Dendritic cell treated with granulocyte-macrophage colony-stimulating factor and Interleukin-4, amounts not matched to agents 40 ng/mL and 50 ng/mL, for 4 days (primary cell): ENCODE measurements at regions of chr10 and their contacts with region 1.

Region 1: GRCh38 chr10:5434017-5434753 is 21.8 kb downstream of the NET1 start:
- H3K4me3 Mint-ChIP-seq: no peak overlapping the region
- H3K27ac Mint-ChIP-seq: no peak overlapping the region
- H3K4me1 Mint-ChIP-seq: peaks cover 7% of the 10 kb centered on the region
- H3K27me3 Mint-ChIP-seq: no peaks in the 10 kb centered on the region

Region 2: DNA sequence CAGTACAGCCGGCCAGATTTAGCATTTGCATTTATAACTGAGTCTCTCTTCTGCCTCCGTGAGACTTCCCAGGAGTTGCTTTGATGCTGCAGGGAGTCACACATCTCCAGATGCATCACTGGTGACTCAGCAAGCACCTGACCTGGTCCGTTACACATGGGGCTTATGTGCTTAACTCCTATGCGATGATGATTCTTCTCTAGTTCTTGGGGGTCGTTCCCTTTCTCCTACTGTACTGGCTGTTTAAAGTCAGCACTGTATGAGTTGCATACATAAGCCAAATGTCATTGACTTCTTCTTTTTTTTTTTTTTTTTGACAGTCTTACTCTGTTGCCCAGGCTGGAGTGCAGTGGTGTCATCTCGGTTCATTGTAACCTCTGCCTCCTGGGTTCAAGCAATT is 621.2 kb before region 1 on chr10:
- intact Hi-C with region 1: loop called (anchors 2 kb)
- H3K4me3 Mint-ChIP-seq: no peak overlapping the region
- H3K27ac Mint-ChIP-seq: no peak overlapping the region
- H3K4me1 Mint-ChIP-seq: peaks cover 33% of the 10 kb centered on the region
- H3K27me3 Mint-ChIP-seq: peaks cover 6% of the 10 kb centered on the region